Right cardiac atrium (tissue), 5 donors: ENCODE measurements at regions of chr10 and their contacts with region 1.

Region 1: GRCh38 chr10:59625721-59626522 is 83.7 kb downstream of the SLC16A9 start:
- DNase-seq: no peak
- ATAC-seq: peak; percentile 78 to 80
- H3K4me3 ChIP-seq: no peak overlapping the region
- H3K27ac ChIP-seq: no peak overlapping the region
- H3K4me1 ChIP-seq: no peaks in the 10 kb centered on the region
- H3K27me3 ChIP-seq: no peaks in the 10 kb centered on the region

Region 2: GRCh38 chr10:59234816-59235429 is 391.0 kb before region 1 on chr10:
- intact Hi-C with region 1: loop called in 2 of 4 experiments (anchors 5 kb)
- DNase-seq: no peak
- ATAC-seq: no peak
- H3K4me3 ChIP-seq: no peak overlapping the region
- H3K27ac ChIP-seq: no peak overlapping the region
- H3K4me1 ChIP-seq: no peaks in the 10 kb centered on the region
- H3K27me3 ChIP-seq: no peaks in the 10 kb centered on the region

Region 3: GRCh38 chr10:59808896-59809643 is 183.1 kb after region 1 on chr10:
- intact Hi-C with region 1: loop called in 1 of 4 experiments (anchors 5 kb)
- DNase-seq: peak; percentile 68 to 90 (median 89)
- ATAC-seq: peak; percentile 84 to 86
- H3K4me3 ChIP-seq: no peak overlapping the region
- H3K27ac ChIP-seq: peak overlapping the region; percentile 39
- H3K4me1 ChIP-seq: peaks cover 2% of the 10 kb centered on the region
- H3K27me3 ChIP-seq: no peaks in the 10 kb centered on the region

Region 4: DNA sequence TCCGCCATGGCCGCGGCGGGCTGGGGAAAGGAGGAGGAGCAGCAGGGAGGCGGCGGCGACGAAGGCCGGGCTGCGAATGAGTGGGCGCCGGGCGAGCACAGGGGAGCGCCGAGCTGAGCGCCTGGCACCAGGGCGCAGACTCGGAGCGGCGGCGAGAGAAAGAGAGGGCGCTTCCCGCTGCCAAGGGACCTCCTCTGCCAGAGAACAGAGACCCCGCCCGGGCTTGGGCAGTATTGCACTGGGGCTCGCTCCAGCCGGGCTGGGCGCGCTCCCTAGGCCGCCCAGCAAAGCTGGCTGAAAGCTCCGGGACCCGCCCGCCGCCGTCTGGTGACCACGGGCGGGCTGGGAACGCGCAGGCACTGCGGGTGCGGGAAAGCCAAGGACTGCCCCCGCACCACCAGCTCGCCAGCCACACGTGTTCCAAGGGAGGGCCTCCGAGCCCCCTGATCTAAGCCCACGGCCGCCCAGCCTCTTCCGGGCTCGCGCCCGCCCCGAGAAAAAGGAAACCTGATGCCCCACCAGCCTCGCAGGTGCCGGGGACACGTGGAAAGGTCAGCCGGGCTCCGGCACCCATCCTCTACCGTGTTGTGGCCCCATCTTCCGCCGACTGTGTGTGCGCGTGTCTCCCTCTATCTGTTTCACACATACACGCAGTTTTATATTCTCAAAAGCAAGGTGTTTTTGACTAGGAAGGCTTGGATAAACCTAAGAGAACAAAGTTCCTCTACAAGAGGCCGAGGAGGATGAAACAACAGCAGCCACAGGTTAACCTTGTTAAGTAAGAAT is 280.7 kb after region 1 on chr10 and contains the start of gene CCDC6:
- intact Hi-C with region 1: loop called in 1 of 4 experiments (anchors 10 kb)
- DNase-seq: peak; percentile 94 to 98 (median 98)
- ATAC-seq: peak; percentile 97 to 98
- H3K4me3 ChIP-seq: peak within 1 kb of the TSS; percentile 90
- H3K27ac ChIP-seq: peak within 1 kb of the TSS; percentile 84
- H3K4me1 ChIP-seq: peaks cover 2% of the 10 kb centered on the region
- H3K27me3 ChIP-seq: no peaks in the 10 kb centered on the region
- total RNA-seq, gene CCDC6: 21.3 to 28.1 (median 23.8) TPM

Region 5: DNA sequence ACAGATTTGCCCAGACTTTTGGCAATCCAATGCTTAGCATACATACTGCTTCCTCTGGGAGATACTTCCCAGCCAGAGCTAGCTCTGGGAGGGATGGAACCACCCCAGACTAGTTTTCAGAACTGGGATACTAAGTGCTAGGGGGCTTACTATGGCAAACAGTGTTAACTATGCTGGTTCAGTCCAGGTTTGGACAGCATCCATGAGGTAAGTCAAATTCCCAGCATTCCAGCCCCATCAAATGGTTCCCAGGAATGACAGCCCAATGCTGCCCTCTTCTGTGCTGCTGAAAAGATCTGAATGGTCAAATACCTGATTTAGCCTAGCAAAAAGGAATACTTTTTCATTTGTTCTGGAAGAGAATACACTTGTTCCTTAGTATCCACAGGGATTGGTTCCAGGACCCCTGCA is 422.2 kb after region 1 on chr10:
- intact Hi-C with region 1: loop called in 1 of 4 experiments (anchors 10 kb)
- DNase-seq: no peak
- ATAC-seq: no peak
- H3K4me3 ChIP-seq: no peak overlapping the region
- H3K27ac ChIP-seq: no peak overlapping the region
- H3K4me1 ChIP-seq: no peaks in the 10 kb centered on the region
- H3K27me3 ChIP-seq: no peaks in the 10 kb centered on the region